ENCODE measurements at regions of chr10 and their contacts with region 1.

Region 1: DNA sequence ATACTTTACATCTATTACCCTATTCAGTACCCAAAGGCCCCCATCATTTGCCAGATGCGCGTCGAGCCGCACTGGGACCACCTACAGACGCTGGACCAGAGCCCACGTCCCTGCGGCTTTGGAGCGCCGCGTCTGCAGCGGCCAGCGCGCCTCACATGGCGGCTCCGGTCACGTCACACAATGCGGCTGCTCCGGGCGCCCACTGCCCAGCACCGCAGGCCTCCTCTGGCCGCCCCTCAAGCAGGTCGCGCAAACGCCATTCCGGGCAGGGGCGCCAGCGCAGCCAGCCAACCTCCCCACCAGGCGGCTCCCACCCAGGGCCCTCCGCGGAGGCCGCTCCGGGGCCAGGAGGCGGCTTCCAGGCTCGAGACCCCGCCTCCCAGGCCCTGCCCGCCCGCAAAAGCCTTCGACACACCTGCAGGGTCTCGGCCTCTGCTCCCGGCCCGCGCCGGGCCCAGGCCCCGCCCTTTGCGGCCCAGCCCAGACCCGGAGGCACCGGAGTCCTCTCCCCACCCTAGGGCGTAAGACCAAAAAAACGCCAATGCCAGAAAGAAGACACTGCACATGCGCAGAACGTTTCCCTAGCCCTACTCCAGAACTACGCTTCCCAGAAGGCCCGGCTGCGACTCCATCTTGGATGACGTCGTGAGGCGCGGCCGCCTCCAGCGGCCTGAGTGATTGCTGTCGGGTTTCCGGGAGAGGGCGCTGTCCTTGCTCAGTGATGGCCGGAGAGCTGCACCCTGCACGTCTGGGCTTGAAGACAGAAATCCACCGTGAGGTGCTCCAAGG is at the start of gene ZNF25:
- DNase-seq: peak; percentile 100
- H3K4me3 ChIP-seq: peak within 1 kb of the TSS; percentile 89
- H3K4me3 Mint-ChIP-seq: peak within 1 kb of the TSS; percentile 81
- H3K27ac Mint-ChIP-seq: peak within 1 kb of the TSS; percentile 94
- H3K4me1 ChIP-seq: no peaks in the 10 kb centered on the region
- H3K4me1 Mint-ChIP-seq: peaks cover 7% of the 10 kb centered on the region
- H3K27me3 ChIP-seq: no peaks in the 10 kb centered on the region
- H3K27me3 Mint-ChIP-seq: no peaks in the 10 kb centered on the region
- CTCF ChIP-seq: peak; percentile 94 to 99
- total RNA-seq, gene ZNF25: 1.5 and 1.7 TPM in 2 replicates

Region 2: DNA sequence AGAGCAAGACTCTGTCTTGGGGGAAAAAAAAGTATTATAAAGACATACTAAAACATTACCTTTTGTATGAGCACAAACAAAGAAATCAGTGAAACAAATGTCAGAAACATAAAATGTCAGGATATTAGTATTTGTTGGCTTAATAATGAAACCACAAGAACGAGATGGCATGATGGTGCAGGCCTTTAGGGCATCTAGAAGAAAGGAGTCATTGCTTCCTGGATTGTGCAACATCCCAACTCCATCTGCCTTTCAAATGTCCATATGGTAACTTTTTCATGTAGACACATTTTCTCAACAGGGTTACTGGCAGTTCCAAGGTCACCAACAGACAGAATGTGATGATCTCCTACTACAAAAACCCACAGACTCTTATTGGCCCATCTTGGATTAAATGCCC is 215.5 kb before region 1 on chr10:
- CTCF ChIA-PET with region 1: no interaction called
- POLR2A ChIA-PET with region 1: no interaction called
- intact Hi-C with region 1: no loop called
- DNase-seq: no peak
- H3K4me3 ChIP-seq: no peak overlapping the region
- H3K4me3 Mint-ChIP-seq: no peak overlapping the region
- H3K27ac Mint-ChIP-seq: no peak overlapping the region
- H3K4me1 ChIP-seq: no peaks in the 10 kb centered on the region
- H3K4me1 Mint-ChIP-seq: no peaks in the 10 kb centered on the region
- H3K27me3 ChIP-seq: no peaks in the 10 kb centered on the region
- H3K27me3 Mint-ChIP-seq: no peaks in the 10 kb centered on the region
- CTCF ChIP-seq: no peak

Region 3: GRCh38 chr10:37937864-37938263 is 38.4 kb before region 1 on chr10:
- CTCF ChIA-PET with region 1: no interaction called
- POLR2A ChIA-PET with region 1: no interaction called
- intact Hi-C with region 1: no loop called
- DNase-seq: no peak
- H3K4me3 ChIP-seq: no peak overlapping the region
- H3K4me3 Mint-ChIP-seq: no peak overlapping the region
- H3K27ac Mint-ChIP-seq: no peak overlapping the region
- H3K4me1 ChIP-seq: no peaks in the 10 kb centered on the region
- H3K4me1 Mint-ChIP-seq: no peaks in the 10 kb centered on the region
- H3K27me3 ChIP-seq: no peaks in the 10 kb centered on the region
- H3K27me3 Mint-ChIP-seq: no peaks in the 10 kb centered on the region
- CTCF ChIP-seq: no peak

Region 4: GRCh38 chr10:38047666-38048065 is 71.4 kb after region 1 on chr10:
- CTCF ChIA-PET with region 1: no interaction called
- POLR2A ChIA-PET with region 1: no interaction called
- intact Hi-C with region 1: no loop called
- DNase-seq: no peak
- H3K4me3 ChIP-seq: no peak overlapping the region
- H3K4me3 Mint-ChIP-seq: no peak overlapping the region
- H3K27ac Mint-ChIP-seq: no peak overlapping the region
- H3K4me1 ChIP-seq: no peaks in the 10 kb centered on the region
- H3K4me1 Mint-ChIP-seq: no peaks in the 10 kb centered on the region
- H3K27me3 ChIP-seq: no peaks in the 10 kb centered on the region
- H3K27me3 Mint-ChIP-seq: no peaks in the 10 kb centered on the region
- CTCF ChIP-seq: no peak

Region 5: GRCh38 chr10:38094158-38094920 is 118.1 kb after region 1 on chr10 and contains the start of gene ZNF37A:
- CTCF ChIA-PET with region 1: no interaction called
- POLR2A ChIA-PET with region 1: no interaction called
- intact Hi-C with region 1: loop called (anchors 1 kb)
- DNase-seq: peak; percentile 93 to 96
- H3K4me3 ChIP-seq: peak within 1 kb of the TSS; percentile 99
- H3K4me3 Mint-ChIP-seq: peak within 1 kb of the TSS; percentile 86
- H3K27ac Mint-ChIP-seq: peak within 1 kb of the TSS; percentile 88
- H3K4me1 ChIP-seq: peaks cover 9% of the 10 kb centered on the region; the same call in 1 of the 2 replicates
- H3K4me1 Mint-ChIP-seq: peaks cover 7% of the 10 kb centered on the region
- H3K27me3 ChIP-seq: no peaks in the 10 kb centered on the region
- H3K27me3 Mint-ChIP-seq: no peaks in the 10 kb centered on the region
- CTCF ChIP-seq: no peak
- total RNA-seq, gene ZNF37A: 14.0 and 15.1 TPM in 2 replicates

Region 6: DNA sequence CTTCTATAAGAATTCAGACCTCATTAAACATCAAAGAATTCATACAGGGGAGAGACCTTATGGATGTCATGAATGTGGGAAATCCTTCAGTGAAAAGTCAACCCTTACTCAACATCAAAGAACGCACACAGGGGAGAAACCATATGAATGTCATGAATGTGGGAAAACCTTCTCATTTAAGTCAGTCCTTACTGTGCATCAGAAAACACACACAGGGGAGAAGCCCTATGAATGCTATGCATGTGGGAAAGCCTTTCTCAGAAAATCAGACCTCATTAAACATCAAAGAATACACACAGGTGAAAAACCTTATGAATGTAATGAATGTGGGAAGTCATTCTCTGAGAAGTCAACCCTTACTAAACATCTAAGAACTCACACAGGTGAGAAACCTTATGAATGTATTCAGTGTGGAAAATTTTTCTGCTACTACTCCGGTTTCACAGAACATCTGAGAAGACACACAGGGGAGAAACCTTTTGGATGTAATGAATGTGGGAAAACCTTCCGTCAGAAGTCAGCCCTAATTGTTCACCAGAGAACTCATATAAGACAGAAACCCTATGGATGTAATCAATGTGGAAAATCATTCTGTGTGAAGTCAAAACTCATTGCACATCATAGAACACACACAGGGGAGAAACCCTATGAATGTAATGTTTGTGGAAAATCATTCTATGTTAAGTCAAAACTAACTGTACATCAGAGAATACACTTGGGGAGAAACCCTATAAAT is 142.0 kb after region 1 on chr10:
- CTCF ChIA-PET with region 1: no interaction called
- POLR2A ChIA-PET with region 1: no interaction called
- intact Hi-C with region 1: no loop called
- DNase-seq: peak in 1 of 2 experiments; percentile 6
- H3K4me3 ChIP-seq: no peak overlapping the region
- H3K4me3 Mint-ChIP-seq: no peak overlapping the region
- H3K27ac Mint-ChIP-seq: no peak overlapping the region
- H3K4me1 ChIP-seq: no peaks in the 10 kb centered on the region
- H3K4me1 Mint-ChIP-seq: no peaks in the 10 kb centered on the region
- H3K27me3 ChIP-seq: no peaks in the 10 kb centered on the region
- H3K27me3 Mint-ChIP-seq: no peaks in the 10 kb centered on the region
- CTCF ChIP-seq: no peak